ENCODE measurements at regions of chr5 and their contacts with region 1.

Region 1: GRCh38 chr5:154157483-154158378 is 32.8 kb upstream of the GALNT10 start:
- DNase-seq: peak; percentile 72
- ATAC-seq: peak; percentile 85
- H3K4me3 Mint-ChIP-seq: no peak overlapping the region
- H3K27ac Mint-ChIP-seq: no peak overlapping the region
- H3K4me1 Mint-ChIP-seq: peaks cover 2% of the 10 kb centered on the region
- H3K27me3 Mint-ChIP-seq: no peaks in the 10 kb centered on the region
- CTCF ChIP-seq: peak; percentile 96

Region 2: GRCh38 chr5:154058055-154059038 is 99.4 kb before region 1 on chr5:
- CTCF ChIA-PET with region 1: interaction called, 10 read pairs
- POLR2A ChIA-PET with region 1: no interaction called
- DNase-seq: no peak
- ATAC-seq: peak; percentile 63
- H3K4me3 Mint-ChIP-seq: no peak overlapping the region
- H3K27ac Mint-ChIP-seq: no peak overlapping the region
- H3K4me1 Mint-ChIP-seq: peaks cover 18% of the 10 kb centered on the region
- H3K27me3 Mint-ChIP-seq: peaks cover 3% of the 10 kb centered on the region; the same call in 1 of the 2 replicates
- CTCF ChIP-seq: no peak

Region 3: DNA sequence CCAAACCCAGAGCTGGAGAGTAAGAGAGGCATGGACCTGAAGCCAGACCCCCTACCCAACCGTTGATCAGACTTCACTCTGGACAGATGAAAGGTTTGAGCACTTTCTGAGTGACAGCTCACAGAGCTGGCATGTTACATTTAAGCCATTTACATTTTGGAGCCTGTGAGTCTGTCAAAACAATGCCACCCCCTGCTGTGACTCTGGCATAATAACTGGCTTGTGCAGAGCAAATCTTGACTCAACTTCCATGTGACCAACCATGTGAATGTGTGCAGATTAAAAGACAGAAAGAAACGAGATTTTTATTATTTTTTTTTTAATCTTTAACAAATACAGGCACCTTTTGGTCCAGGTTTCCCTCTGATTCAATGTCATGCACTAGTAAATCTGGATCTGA is 70.5 kb before region 1 on chr5:
- CTCF ChIA-PET with region 1: interaction called, 14 read pairs
- POLR2A ChIA-PET with region 1: no interaction called
- DNase-seq: no peak
- ATAC-seq: no peak
- H3K4me3 Mint-ChIP-seq: no peak overlapping the region
- H3K27ac Mint-ChIP-seq: no peak overlapping the region
- H3K4me1 Mint-ChIP-seq: peaks cover 28% of the 10 kb centered on the region
- H3K27me3 Mint-ChIP-seq: peaks cover 13% of the 10 kb centered on the region
- CTCF ChIP-seq: no peak

Region 4: DNA sequence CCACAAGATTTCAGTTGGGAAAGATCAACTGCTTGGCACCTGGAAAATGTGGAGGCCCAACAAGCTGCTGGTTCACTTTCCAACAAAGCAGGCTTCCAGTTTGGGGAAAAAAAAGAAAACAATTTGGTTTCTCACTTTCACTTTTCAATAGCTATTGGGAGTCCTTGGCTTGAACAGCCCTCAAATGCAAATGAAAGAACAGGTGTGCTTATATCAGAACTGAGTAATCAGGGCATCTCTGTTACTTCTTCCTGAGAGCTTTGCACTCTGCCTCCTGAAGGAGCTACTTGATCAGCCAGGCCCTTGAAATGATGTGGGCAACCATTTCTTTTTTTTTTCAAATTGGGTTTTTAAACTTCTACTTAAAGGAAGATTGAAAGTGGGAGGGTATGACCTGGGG is 45.5 kb before region 1 on chr5:
- CTCF ChIA-PET with region 1: interaction called, 20 read pairs
- POLR2A ChIA-PET with region 1: interaction called, 3 read pairs
- DNase-seq: no peak
- ATAC-seq: no peak
- H3K4me3 Mint-ChIP-seq: no peak overlapping the region
- H3K27ac Mint-ChIP-seq: no peak overlapping the region
- H3K4me1 Mint-ChIP-seq: peaks cover 52% of the 10 kb centered on the region
- H3K27me3 Mint-ChIP-seq: peaks cover 8% of the 10 kb centered on the region; the same call in 1 of the 2 replicates
- CTCF ChIP-seq: no peak

Region 5: GRCh38 chr5:154138701-154139100 is 19.0 kb before region 1 on chr5:
- CTCF ChIA-PET with region 1: interaction called, 18 read pairs
- POLR2A ChIA-PET with region 1: no interaction called
- DNase-seq: no peak
- ATAC-seq: peak; percentile 17
- H3K4me3 Mint-ChIP-seq: no peak overlapping the region
- H3K27ac Mint-ChIP-seq: no peak overlapping the region
- H3K4me1 Mint-ChIP-seq: peaks cover 32% of the 10 kb centered on the region
- H3K27me3 Mint-ChIP-seq: peaks cover 16% of the 10 kb centered on the region
- CTCF ChIP-seq: no peak

Region 6: GRCh38 chr5:154174091-154174490 is 16.4 kb after region 1 on chr5:
- CTCF ChIA-PET with region 1: interaction called, 36 read pairs
- POLR2A ChIA-PET with region 1: interaction called, 3 read pairs
- DNase-seq: no peak
- ATAC-seq: no peak
- H3K4me3 Mint-ChIP-seq: no peak overlapping the region
- H3K27ac Mint-ChIP-seq: no peak overlapping the region
- H3K4me1 Mint-ChIP-seq: peaks cover 21% of the 10 kb centered on the region
- H3K27me3 Mint-ChIP-seq: peaks cover 4% of the 10 kb centered on the region; the same call in 1 of the 2 replicates
- CTCF ChIP-seq: no peak

Measured in WTC11 (cell line).